ENCODE measurements at regions of chr12 and their contacts with region 1.

Region 1: DNA sequence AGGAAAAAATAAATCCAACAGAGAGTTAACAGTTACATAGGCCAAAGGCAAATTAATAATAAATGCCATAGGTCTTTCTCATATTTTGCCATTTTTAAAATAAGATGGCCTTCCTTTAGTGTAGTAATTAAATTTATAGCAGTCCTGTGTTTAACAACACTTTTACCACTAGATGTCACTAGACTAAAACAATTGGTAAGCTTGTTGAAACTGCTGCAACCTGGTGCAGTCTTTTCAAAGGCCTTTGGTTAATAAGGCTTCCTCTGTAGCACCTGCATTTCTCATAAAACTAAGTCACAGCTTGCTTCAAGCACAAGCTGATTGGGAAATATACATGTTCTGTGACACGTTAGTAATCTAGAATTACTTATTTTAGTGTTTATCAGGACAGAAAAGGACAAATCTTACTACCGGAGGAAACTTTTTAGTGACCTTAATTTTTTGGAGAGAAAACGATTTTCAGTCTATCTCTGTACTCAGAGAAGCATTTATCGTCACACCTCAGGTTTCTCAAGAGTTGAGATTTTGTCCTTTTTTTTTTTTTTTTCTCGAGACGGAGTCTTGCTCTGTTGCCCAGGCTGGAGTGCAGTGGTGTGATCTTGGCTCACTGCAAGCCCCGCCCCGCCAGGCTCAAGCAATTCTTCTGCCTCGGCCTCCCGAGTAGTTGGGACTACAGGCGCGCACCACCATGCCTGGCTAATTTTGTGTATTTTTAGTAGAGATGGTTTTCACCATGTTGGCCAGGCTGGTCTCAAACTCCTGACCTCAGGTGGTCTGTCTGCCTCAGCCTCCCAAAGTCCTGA is 20.0 kb downstream of the BORCS5 start:
- DNase-seq: peak in 2 of 5 donors; percentile 73 to 76
- H3K4me3 ChIP-seq: no peak overlapping the region
- H3K4me3 Mint-ChIP-seq: no peak overlapping the region
- H3K27ac ChIP-seq: no peak overlapping the region
- H3K27ac Mint-ChIP-seq: peak overlapping the region in 7 of 8 donors; percentile 59 to 97 (median 88)
- H3K4me1 ChIP-seq: peaks cover 28% of the 10 kb centered on the region
- H3K4me1 Mint-ChIP-seq: peaks cover 40 to 60% (median 51%) of the 10 kb centered on the region in 3 donors
- H3K27me3 ChIP-seq: no peaks in the 10 kb centered on the region
- H3K27me3 Mint-ChIP-seq: no peaks in the 10 kb centered on the region

Region 2: GRCh38 chr12:12356886-12357718 is 19.7 kb before region 1 on chr12 and contains the start of gene BORCS5:
- CTCF ChIA-PET with region 1: interaction called, 19 read pairs
- POLR2A ChIA-PET with region 1: interaction called, 17 read pairs
- DNase-seq: peak; percentile 97 to 99 (median 99)
- H3K4me3 ChIP-seq: peak within 1 kb of the TSS; percentile 62
- H3K4me3 Mint-ChIP-seq: peak within 1 kb of the TSS; percentile 88 to 98 (median 97)
- H3K27ac ChIP-seq: peak within 1 kb of the TSS; percentile 94
- H3K27ac Mint-ChIP-seq: peak within 1 kb of the TSS; percentile 91 to 100 (median 99)
- H3K4me1 ChIP-seq: peaks cover 26% of the 10 kb centered on the region
- H3K4me1 Mint-ChIP-seq: peaks cover 36 to 54% (median 52%) of the 10 kb centered on the region in 3 donors
- H3K27me3 ChIP-seq: no peaks in the 10 kb centered on the region
- H3K27me3 Mint-ChIP-seq: peaks cover 0 to 1% of the 10 kb centered on the region in 2 donors
- total RNA-seq, gene BORCS5: 36.4 to 39.7 TPM

Region 3: GRCh38 chr12:12408265-12408690 is 31.4 kb after region 1 on chr12:
- CTCF ChIA-PET with region 1: no interaction called
- POLR2A ChIA-PET with region 1: no interaction called
- DNase-seq: peak in 1 of 5 donors; percentile 16
- H3K4me3 ChIP-seq: no peak overlapping the region
- H3K4me3 Mint-ChIP-seq: peak overlapping the region in 5 of 7 donors; percentile 1 to 52 (median 27)
- H3K27ac ChIP-seq: no peak overlapping the region
- H3K27ac Mint-ChIP-seq: peak overlapping the region; percentile 22 to 83 (median 60)
- H3K4me1 ChIP-seq: peaks cover 18% of the 10 kb centered on the region
- H3K4me1 Mint-ChIP-seq: peaks cover 25 to 60% (median 58%) of the 10 kb centered on the region in 3 donors
- H3K27me3 ChIP-seq: no peaks in the 10 kb centered on the region
- H3K27me3 Mint-ChIP-seq: no peaks in the 10 kb centered on the region

Region 4: GRCh38 chr12:12442548-12443071 is 65.8 kb after region 1 on chr12:
- CTCF ChIA-PET with region 1: interaction called, 16 read pairs
- POLR2A ChIA-PET with region 1: interaction called, 10 read pairs
- DNase-seq: no peak
- H3K4me3 ChIP-seq: no peak overlapping the region
- H3K4me3 Mint-ChIP-seq: peak overlapping the region in 4 of 7 donors; percentile 66 to 74 (median 72)
- H3K27ac ChIP-seq: peak overlapping the region; percentile 83
- H3K27ac Mint-ChIP-seq: peak overlapping the region; percentile 95 to 100 (median 98)
- H3K4me1 ChIP-seq: peaks cover 54% of the 10 kb centered on the region
- H3K4me1 Mint-ChIP-seq: peaks cover 84 to 94% (median 91%) of the 10 kb centered on the region in 3 donors
- H3K27me3 ChIP-seq: no peaks in the 10 kb centered on the region
- H3K27me3 Mint-ChIP-seq: no peaks in the 10 kb centered on the region

Region 5: DNA sequence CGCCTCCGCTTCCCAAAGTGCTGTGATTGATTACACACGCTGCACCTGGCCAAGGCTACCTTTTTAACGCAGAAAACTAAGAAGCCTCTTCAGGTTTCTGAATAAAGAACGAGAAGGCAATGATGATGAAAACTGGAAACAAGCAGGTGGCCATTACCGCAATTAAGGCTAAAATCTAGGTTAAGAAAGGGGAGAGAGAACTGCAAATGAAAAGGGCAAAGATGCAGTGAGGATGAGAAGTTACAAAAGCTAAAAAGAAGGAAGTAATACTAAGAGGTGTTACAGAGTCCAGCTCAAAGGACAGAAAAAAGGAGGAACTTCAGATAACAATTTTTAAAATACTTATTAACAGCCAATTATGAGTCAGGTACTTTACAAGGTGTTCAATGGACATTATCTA is 106.1 kb after region 1 on chr12:
- CTCF ChIA-PET with region 1: interaction called, 19 read pairs
- POLR2A ChIA-PET with region 1: no interaction called
- DNase-seq: no peak
- H3K4me3 ChIP-seq: peak overlapping the region; percentile 36
- H3K4me3 Mint-ChIP-seq: peak overlapping the region; percentile 61 to 81 (median 75)
- H3K27ac ChIP-seq: peak overlapping the region; percentile 66
- H3K27ac Mint-ChIP-seq: peak overlapping the region; percentile 89 to 99 (median 94)
- H3K4me1 ChIP-seq: peaks cover 26% of the 10 kb centered on the region
- H3K4me1 Mint-ChIP-seq: peaks cover 43 to 77% (median 76%) of the 10 kb centered on the region in 3 donors
- H3K27me3 ChIP-seq: no peaks in the 10 kb centered on the region
- H3K27me3 Mint-ChIP-seq: no peaks in the 10 kb centered on the region

Region 6: GRCh38 chr12:12562585-12563261 is 185.9 kb after region 1 on chr12 and contains the start of gene DUSP16:
- CTCF ChIA-PET with region 1: interaction called, 29 read pairs
- POLR2A ChIA-PET with region 1: interaction called, 7 read pairs
- DNase-seq: peak; percentile 66 to 89 (median 88)
- H3K4me3 ChIP-seq: peak within 1 kb of the TSS; percentile 71
- H3K4me3 Mint-ChIP-seq: peak within 1 kb of the TSS; percentile 91 to 96 (median 92)
- H3K27ac ChIP-seq: peak within 1 kb of the TSS; percentile 95
- H3K27ac Mint-ChIP-seq: peak within 1 kb of the TSS; percentile 97 to 99 (median 98)
- H3K4me1 ChIP-seq: peaks cover 27% of the 10 kb centered on the region
- H3K4me1 Mint-ChIP-seq: peaks cover 31 to 42% (median 40%) of the 10 kb centered on the region in 3 donors
- H3K27me3 ChIP-seq: no peaks in the 10 kb centered on the region
- H3K27me3 Mint-ChIP-seq: peaks cover 0 to 4% of the 10 kb centered on the region in 2 donors
- total RNA-seq, gene DUSP16: 37.5 to 41.2 TPM